ENCODE measurements at regions of chr7 and their contacts with region 1.

Region 1: GRCh38 chr7:106176414-106177299 is 64.5 kb upstream of the SYPL1 start:
- DNase-seq: peak; percentile 88
- H3K4me3 ChIP-seq: no peak overlapping the region
- H3K27ac ChIP-seq: no peak overlapping the region
- H3K4me1 ChIP-seq: peaks cover 4 to 7% of the 10 kb centered on the region in 2 experiments; a peak in 2 of 4 replicates
- H3K27me3 ChIP-seq: no peaks in the 10 kb centered on the region
- CTCF ChIP-seq: peak; percentile 99
- EP300 ChIP-seq: no peak
- RAD21 ChIP-seq: peak; percentile 100

Region 2: GRCh38 chr7:105975770-105976422 is 200.8 kb before region 1 on chr7:
- CTCF ChIA-PET with region 1: no interaction called
- POLR2A ChIA-PET with region 1: no interaction called
- DNase-seq: no peak
- H3K4me3 ChIP-seq: no peak overlapping the region
- H3K27ac ChIP-seq: no peak overlapping the region
- H3K4me1 ChIP-seq: no peaks in the 10 kb centered on the region
- H3K27me3 ChIP-seq: no peaks in the 10 kb centered on the region; the same call in 1 of the 2 replicates
- CTCF ChIP-seq: no peak
- EP300 ChIP-seq: no peak
- RAD21 ChIP-seq: no peak

Region 3: GRCh38 chr7:106205621-106206222 is 29.1 kb after region 1 on chr7:
- CTCF ChIA-PET with region 1: interaction called, 52 read pairs
- POLR2A ChIA-PET with region 1: no interaction called
- DNase-seq: no peak
- H3K4me3 ChIP-seq: no peak overlapping the region
- H3K27ac ChIP-seq: no peak overlapping the region
- H3K4me1 ChIP-seq: peaks cover 0 to 6% of the 10 kb centered on the region in 2 experiments; a peak in 2 of 4 replicates
- H3K27me3 ChIP-seq: no peaks in the 10 kb centered on the region
- CTCF ChIP-seq: no peak
- EP300 ChIP-seq: no peak
- RAD21 ChIP-seq: no peak

Region 4: DNA sequence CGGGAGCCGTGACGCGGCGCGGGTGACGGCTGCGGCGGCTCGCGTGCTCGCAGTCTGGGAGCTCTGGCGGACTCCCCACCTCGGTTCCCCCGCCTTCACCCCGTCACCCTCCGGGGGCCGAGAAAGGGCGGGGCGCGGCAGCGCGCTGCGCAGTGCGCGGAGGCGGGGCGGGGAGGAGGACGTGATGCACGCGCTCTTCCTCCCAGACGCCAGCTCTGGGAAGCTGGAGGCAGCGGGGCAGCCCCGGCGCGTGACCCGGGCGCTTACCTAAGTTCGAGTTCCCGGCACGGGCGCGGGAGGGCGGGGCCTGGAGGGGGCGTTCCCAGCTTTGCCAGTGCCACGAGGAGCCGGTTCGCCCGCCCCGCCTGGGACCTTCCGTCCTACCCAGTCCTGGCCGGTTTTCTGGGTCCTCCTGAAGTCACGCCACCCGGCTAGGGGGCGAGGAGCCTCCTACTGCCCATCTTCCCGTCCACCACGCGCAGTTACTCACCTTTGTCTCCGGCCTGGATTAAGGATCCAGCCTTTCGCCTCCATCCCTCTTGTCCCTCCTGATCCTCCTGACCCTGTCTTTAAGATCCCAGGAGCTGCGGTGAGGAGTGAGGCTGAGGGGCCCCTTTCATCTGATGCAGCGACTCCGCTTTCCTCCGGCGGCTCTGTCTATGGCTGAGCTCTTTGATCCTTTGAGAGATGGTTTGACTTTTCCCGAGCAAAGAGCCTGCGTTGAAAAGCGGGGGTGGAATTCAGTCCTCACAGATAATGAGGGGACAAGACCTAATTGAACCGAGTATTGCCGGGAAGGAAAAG is 108.6 kb after region 1 on chr7:
- CTCF ChIA-PET with region 1: interaction called, 21 read pairs
- POLR2A ChIA-PET with region 1: interaction called, 4 read pairs
- DNase-seq: peak; percentile 99
- H3K4me3 ChIP-seq: peak overlapping the region; percentile 75 to 98
- H3K27ac ChIP-seq: peak overlapping the region; percentile 96 to 98
- H3K4me1 ChIP-seq: peaks cover 0 to 22% of the 10 kb centered on the region in 2 experiments; a peak in 2 of 4 replicates
- H3K27me3 ChIP-seq: no peaks in the 10 kb centered on the region
- CTCF ChIP-seq: no peak; the same call in 1 of the 2 replicates
- EP300 ChIP-seq: peak; percentile 6 to 48; a peak in 1 of 4 replicates
- RAD21 ChIP-seq: no peak

Region 5: DNA sequence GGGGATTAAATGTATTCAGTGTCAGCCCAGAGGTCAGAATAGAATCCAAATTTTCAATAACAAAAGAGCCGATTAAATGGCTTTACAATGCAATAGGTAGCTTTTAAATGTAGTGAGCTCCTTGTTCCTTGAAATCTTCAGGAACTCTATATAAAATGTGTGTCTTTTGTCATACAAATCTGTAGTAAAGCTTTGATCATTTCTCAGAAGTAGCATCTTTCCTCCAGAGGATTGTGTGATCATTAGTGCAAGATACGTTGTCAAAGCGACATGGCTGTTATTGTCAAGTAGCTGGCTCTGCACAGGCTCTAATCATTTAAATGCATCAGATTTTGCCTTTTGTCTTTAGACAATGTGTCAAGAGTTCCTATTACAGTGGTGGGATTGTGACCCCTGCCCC is 224.3 kb after region 1 on chr7:
- CTCF ChIA-PET with region 1: interaction called, 13 read pairs
- POLR2A ChIA-PET with region 1: no interaction called
- DNase-seq: no peak
- H3K4me3 ChIP-seq: no peak overlapping the region
- H3K27ac ChIP-seq: no peak overlapping the region
- H3K4me1 ChIP-seq: no peaks in the 10 kb centered on the region
- H3K27me3 ChIP-seq: no peaks in the 10 kb centered on the region; the same call in 1 of the 2 replicates
- CTCF ChIP-seq: no peak
- EP300 ChIP-seq: no peak
- RAD21 ChIP-seq: no peak

Region 6: GRCh38 chr7:106461993-106462859 is 285.6 kb after region 1 on chr7:
- CTCF ChIA-PET with region 1: interaction called, 395 read pairs
- POLR2A ChIA-PET with region 1: interaction called, 6 read pairs
- DNase-seq: peak; percentile 12
- H3K4me3 ChIP-seq: no peak overlapping the region
- H3K27ac ChIP-seq: no peak overlapping the region
- H3K4me1 ChIP-seq: peaks cover 0 to 4% of the 10 kb centered on the region in 2 experiments; a peak in 1 of 4 replicates
- H3K27me3 ChIP-seq: no peaks in the 10 kb centered on the region
- CTCF ChIP-seq: peak; percentile 79
- EP300 ChIP-seq: no peak
- RAD21 ChIP-seq: peak; percentile 83

Region 7: GRCh38 chr7:106736508-106737201 is 560.0 kb after region 1 on chr7:
- CTCF ChIA-PET with region 1: interaction called, 54 read pairs
- POLR2A ChIA-PET with region 1: no interaction called
- DNase-seq: peak; percentile 30
- H3K4me3 ChIP-seq: no peak overlapping the region
- H3K27ac ChIP-seq: peak overlapping the region; percentile 38 to 56; a peak in 3 of 4 replicates
- H3K4me1 ChIP-seq: peaks cover 4 to 5% of the 10 kb centered on the region in 2 experiments; a peak in 3 of 4 replicates
- H3K27me3 ChIP-seq: no peaks in the 10 kb centered on the region
- CTCF ChIP-seq: peak; percentile 69
- EP300 ChIP-seq: no peak
- RAD21 ChIP-seq: peak; percentile 75

Measured in SK-N-SH (cell line).